PC-9 (cell line): ENCODE measurements at regions of chr22 and their contacts with region 1.

Region 1: DNA sequence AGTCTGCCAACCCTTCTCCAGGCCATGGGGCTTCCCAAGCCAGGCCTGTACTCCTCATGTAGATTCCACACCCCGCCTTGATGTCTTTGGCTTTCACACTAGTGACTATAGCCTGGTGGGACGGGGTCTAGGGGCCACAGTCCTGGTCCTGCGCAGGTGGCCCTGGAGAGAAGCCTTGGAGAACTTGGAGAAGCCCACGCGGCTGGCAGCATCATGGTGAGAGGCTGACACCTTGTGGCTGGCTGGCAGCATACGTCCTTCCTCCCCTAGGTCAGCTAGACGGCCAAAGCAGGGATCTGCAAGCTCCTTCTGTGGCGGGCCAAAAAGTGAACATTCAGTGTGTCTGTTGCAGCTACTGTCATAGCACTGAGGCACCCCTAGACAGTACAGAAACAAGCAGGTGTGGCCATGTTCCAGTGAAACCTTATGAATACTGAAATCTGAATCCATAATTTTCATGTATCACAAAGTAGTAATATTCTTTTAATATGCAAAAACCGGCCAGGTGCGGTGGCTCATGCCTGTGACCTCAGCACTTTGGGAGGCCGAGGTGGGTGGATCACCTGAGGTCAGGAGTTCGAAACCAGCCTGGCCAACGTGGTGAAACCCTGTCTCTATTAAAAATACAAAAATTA is 42.0 kb downstream of the FAM83F start:
- DNase-seq: peak; percentile 65 to 73
- H3K4me3 ChIP-seq: no peak overlapping the region
- H3K27ac ChIP-seq: no peak overlapping the region
- H3K4me1 ChIP-seq: peaks cover 14% of the 10 kb centered on the region
- H3K27me3 ChIP-seq: no peaks in the 10 kb centered on the region; the same call in 1 of the 2 replicates
- CTCF ChIP-seq: peak; percentile 94

Region 2: DNA sequence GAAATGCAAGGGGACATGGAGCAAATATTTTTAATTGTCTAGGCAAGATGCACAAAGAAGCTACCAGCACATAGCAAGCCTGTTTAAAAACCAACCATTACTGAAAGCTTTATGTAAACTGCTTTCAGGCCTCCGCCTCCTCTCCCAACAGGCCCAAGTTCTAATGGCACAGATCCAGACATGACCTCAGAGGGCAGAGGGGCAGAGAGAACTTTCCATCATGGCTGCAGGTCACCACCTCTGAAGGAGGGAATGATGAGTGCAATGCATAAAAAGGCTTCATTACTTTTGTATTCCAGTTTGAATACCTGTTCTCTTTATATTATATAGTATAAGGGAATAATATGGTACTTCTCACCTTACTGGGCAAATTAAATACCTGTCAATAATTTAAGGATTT is 1545.8 kb before region 1 on chr22:
- CTCF ChIA-PET with region 1: no interaction called
- POLR2A ChIA-PET with region 1: no interaction called
- intact Hi-C with region 1: no loop called
- DNase-seq: peak in 1 of 2 experiments; percentile 31
- H3K4me3 ChIP-seq: no peak overlapping the region
- H3K27ac ChIP-seq: peak overlapping the region; percentile 15; the same call in 1 of the 2 replicates
- H3K4me1 ChIP-seq: no peaks in the 10 kb centered on the region
- H3K27me3 ChIP-seq: no peaks in the 10 kb centered on the region
- CTCF ChIP-seq: no peak

Region 3: DNA sequence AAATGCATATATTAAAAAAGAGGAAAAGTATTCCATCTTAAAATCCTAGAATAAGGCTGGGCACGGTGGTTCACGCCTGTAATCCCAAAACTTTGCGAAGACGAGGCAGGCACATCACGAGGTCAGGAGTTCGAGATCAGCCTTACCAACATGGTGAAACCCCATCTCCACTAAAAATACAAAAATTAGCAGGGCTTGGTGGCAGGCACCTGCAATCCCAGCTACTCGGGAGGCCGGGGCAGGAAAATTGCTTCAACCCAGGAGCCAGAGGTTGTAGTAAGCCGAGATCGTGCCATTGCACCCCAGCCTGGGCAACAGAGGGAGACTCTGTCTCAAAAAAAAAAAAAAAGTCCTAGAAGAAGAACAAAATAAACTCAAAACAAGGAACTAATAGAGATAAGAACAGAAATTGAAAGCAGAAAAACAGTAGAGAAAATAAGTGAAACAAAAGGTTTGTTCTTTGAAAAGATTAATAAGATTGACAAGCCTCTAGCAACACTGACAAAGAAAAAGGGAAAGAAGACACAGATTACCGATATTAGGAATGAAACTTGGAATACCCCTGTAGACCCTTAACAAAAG is 839.2 kb before region 1 on chr22:
- CTCF ChIA-PET with region 1: no interaction called
- POLR2A ChIA-PET with region 1: interaction called, 14 read pairs
- intact Hi-C with region 1: no loop called
- DNase-seq: no peak
- H3K4me3 ChIP-seq: no peak overlapping the region
- H3K27ac ChIP-seq: no peak overlapping the region
- H3K4me1 ChIP-seq: no peaks in the 10 kb centered on the region
- H3K27me3 ChIP-seq: no peaks in the 10 kb centered on the region
- CTCF ChIP-seq: no peak

Region 4: GRCh38 chr22:39490135-39490798 is 546.4 kb before region 1 on chr22:
- CTCF ChIA-PET with region 1: no interaction called
- POLR2A ChIA-PET with region 1: no interaction called
- intact Hi-C with region 1: loop called (anchors 1 kb)
- DNase-seq: peak; percentile 68 to 76
- H3K4me3 ChIP-seq: no peak overlapping the region
- H3K27ac ChIP-seq: no peak overlapping the region
- H3K4me1 ChIP-seq: no peaks in the 10 kb centered on the region
- H3K27me3 ChIP-seq: no peaks in the 10 kb centered on the region
- CTCF ChIP-seq: no peak

Region 5: DNA sequence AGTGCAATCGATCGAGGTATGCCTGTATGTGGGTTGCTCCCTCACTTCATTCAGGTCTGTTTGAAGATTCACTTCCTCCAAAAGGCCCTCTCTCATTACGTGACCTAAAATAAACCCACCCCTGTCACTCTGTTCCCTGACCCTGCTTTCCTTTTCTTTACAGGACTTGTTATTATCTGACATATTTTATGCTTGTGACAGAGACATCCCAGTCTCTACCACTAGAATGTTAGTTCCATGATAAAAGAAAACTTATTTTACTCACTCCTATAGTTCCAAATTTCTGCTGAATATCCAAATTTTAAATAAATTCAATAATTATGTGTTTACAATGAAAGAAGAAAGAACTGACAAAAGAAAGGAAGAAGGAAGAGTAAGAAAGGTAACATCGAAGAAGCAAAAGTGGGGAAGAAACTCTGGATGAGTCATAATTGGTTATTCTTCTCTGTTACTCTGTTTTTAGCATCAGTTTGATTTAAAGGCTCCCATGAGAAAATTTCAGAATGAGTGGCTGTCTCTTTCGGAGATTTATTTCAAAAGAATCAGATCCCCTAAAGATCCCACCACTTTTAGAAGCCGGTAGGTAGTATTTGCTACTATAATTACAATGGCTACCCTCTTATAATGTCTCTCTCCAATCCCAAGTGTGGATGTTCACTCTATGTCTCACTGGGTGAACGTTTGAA is 176.7 kb before region 1 on chr22:
- CTCF ChIA-PET with region 1: interaction called, 10 read pairs
- POLR2A ChIA-PET with region 1: no interaction called
- intact Hi-C with region 1: no loop called
- DNase-seq: peak in 1 of 2 experiments; percentile 6
- H3K4me3 ChIP-seq: no peak overlapping the region
- H3K27ac ChIP-seq: no peak overlapping the region
- H3K4me1 ChIP-seq: no peaks in the 10 kb centered on the region
- H3K27me3 ChIP-seq: peaks cover 69% of the 10 kb centered on the region
- CTCF ChIP-seq: no peak